Gastrocnemius medialis (tissue), 4 donors: ENCODE measurements at regions of chr4 and their contacts with region 1.

Region 1: DNA sequence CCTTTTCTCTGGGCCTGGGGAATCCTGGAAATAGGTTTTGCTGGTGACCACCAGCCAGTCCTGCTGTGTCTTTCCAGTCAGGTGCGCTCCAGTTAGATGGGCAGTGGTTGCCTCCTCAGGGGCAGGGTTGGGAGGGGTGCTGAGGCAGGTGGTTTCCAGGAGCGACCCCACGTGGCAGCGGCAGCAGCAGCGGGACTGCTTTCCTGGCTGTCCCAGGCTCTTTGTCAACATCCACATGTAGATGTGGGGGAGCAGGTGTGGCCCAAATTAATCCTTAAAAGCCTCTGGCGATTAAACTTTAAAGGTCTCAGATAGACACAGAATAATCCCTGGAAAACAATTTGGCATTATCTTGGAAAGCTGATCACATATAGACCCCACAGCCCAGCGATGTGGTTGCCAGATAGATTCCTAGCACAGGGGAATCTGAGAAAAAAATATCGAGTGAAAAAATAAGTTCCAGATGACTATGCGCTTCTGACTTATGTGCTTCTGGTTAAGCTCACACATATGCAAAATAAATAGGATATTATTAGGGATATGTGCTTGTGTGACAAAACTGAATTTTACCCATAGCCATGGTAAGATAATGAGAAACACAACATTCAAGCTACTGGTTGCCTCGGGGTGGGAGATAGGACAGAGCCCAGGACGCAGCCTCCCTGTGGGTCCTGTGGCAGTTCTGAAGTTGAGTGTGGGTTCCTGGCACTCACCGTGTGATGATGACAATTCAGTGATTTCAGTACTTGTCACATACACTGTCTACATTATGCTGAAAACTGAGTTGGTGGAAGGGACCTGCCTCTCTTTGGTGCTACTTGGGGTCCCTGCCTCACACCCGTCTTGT is 336.4 kb downstream of the ARHGAP10 start:
- DNase-seq: no peak
- ATAC-seq: no peak
- H3K4me3 ChIP-seq: no peak overlapping the region
- H3K27ac ChIP-seq: peak overlapping the region in 3 of 4 donors; percentile 39 to 42 (median 42)
- H3K4me1 ChIP-seq: peaks cover 43 to 48% of the 10 kb centered on the region in 2 donors
- H3K27me3 ChIP-seq: no peaks in the 10 kb centered on the region
- CTCF ChIP-seq: no peak
- POLR2A ChIP-seq: no peak

Region 2: DNA sequence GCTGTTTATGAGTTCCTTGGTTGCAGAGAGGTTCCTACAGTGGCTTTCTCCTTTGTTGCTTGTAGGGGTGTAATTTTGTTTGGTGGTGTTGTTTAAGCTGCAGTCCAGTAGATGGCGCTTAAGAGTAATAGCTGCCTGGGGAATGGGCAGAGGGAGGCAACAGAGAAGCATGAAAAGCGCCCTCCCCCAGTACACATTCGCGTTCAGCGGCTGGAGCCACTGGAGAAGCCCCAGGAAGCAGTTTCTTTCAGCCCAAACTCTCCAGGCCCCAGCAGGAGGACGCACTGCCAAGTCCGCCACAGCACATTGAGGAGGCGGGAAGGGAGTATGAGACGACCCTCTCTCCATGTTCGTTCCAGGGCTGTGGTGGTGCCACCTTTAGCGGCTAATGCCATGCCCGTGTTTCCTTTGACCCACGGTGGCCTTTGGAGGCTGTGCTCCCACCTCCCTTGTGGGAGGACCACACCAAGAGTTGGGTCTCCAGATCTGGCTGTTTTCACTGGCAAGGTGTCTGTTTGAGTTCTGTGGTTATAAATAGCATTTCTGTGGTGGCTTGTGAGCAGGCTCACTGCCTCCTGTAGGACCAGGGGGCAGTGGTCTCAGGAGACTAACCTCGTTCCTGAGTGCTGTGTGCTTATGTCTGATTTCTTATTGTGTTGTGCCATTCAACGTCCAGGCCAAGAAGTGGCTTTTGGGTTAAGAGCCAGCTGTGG is 84.1 kb before region 1 on chr4:
- in situ Hi-C with region 1: no loop called
- intact Hi-C with region 1: loop called (anchors 2 kb)
- DNase-seq: peak; percentile 11 to 51
- ATAC-seq: peak; percentile 79 to 88
- H3K4me3 ChIP-seq: no peak overlapping the region
- H3K27ac ChIP-seq: peak overlapping the region; percentile 53 to 75 (median 57)
- H3K4me1 ChIP-seq: peaks cover 31 to 39% of the 10 kb centered on the region in 2 donors
- H3K27me3 ChIP-seq: no peaks in the 10 kb centered on the region
- CTCF ChIP-seq: peak; percentile 59 to 80 (median 71)
- POLR2A ChIP-seq: no peak